Sigmoid colon (tissue), 7 donors: ENCODE measurements at regions of chr9 and their contacts with region 1.

Region 1: DNA sequence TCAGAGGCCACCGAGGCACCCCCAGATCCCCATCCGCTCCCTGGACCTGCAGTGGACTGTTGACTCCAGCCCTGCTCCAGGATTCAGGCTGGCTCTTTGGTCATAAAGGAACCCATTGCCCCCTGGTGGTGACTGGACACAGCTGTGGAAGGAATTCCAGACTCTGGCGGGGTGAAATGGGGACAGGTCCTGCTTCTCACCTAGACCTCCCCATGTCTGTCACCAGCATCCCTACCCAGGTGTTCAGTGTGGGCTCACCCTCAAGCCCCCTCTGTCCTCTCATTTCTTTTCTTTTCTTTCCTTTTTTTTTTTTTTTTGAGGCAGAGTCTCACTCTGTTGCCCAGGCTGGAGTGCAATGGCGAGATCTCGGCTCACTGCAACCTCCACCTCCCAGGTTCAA is 25.5 kb upstream of the STXBP1 start:
- DNase-seq: peak; percentile 94
- H3K4me3 ChIP-seq: no peak overlapping the region
- H3K27ac ChIP-seq: peak overlapping the region in 3 of 4 donors; percentile 32 to 77 (median 76)
- H3K4me1 ChIP-seq: peaks cover 0 to 23% (median 19%) of the 10 kb centered on the region in 4 donors
- H3K27me3 ChIP-seq: no peaks in the 10 kb centered on the region
- CTCF ChIP-seq: peak; percentile 79 to 93 (median 88)
- EP300 ChIP-seq: no peak
- POLR2A ChIP-seq: no peak

Region 2: DNA sequence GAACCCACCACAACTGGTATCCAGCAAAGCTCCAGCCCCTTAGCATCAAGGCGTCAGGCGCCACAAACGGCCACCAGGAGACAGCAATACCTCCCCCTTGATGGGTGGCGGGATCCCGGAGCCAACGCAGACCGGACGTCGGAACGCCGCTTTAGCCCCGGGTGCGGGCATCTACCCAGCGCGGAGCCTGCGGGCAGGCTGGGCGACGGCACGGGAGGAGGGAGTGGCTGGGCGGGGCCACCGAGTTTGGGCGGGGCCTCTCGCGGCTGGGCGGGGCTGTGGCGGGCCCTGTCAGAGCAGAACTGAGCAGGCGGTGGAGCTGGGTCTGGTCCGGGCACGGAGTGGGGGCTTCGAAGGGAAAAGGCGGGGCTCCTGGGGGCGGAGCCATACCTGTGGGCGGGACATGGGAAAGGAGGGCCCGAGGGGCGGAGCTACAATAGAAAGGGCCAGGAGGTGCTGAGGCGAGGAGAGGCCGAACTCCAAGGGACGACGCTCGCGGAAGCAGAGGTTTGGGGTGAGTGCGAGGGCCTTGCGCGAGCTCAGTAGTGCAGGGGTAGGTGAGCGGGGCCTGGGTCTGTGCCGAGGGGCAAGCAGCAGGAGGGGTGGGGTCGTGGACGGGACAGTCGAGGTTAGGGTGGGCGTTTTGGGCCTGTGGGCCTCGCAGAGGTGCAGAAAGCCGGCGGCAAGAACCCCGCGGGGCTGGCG is 362.2 kb before region 1 on chr9:
- intact Hi-C with region 1: no loop called
- DNase-seq: peak; percentile 97
- H3K4me3 ChIP-seq: peak overlapping the region; percentile 36 to 84 (median 68)
- H3K27ac ChIP-seq: peak overlapping the region; percentile 80 to 85 (median 82)
- H3K4me1 ChIP-seq: peaks cover 0 to 23% (median 20%) of the 10 kb centered on the region in 4 donors
- H3K27me3 ChIP-seq: no peaks in the 10 kb centered on the region
- CTCF ChIP-seq: peak in 2 of 4 experiments; percentile 18 to 32
- EP300 ChIP-seq: no peak
- POLR2A ChIP-seq: no peak

Region 3: DNA sequence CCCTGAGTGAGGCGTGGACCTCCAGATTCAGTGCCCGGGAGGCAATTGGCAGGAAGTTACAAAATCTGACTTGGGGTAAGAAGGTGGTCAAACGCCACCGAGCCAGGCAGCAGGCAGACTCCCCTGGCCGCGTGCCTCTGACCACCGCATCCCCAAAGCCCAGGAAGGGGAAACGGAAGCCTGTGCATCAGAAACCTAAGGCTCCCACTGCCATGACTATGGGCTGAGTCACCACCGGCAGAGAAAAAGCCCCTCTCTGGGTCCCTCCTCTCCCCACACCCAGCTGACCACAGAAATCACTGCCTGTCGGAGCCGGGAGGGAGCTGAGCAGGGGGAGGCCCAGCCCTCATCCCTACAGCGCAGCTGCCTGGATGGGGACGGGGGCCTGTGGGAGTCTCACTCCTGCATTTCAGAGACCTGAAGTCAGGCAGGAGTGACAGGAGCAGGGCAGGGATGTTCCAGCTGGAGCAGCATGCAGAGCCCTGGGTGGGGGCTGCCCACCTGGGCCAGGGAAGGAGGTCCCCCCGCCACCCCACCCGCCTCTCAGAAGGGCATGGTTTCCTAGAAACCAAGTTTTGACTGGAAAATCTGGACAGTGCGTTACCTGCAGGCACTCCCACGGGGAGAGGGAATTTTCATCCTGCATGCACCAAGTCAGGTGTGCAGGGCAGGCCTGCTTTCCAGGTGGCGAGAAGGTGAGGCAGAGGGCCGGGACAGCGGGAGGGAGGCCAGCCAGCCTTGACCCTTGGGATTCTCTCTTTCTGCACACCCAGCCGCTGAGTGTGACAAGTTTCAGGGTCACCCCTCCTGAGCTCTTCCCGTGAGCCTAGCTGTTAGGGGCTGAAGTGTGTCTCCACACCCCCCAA is 67.0 kb before region 1 on chr9:
- intact Hi-C with region 1: loop called (anchors 5 kb)
- DNase-seq: no peak
- H3K4me3 ChIP-seq: no peak overlapping the region
- H3K27ac ChIP-seq: peak overlapping the region; percentile 20 to 90 (median 59)
- H3K4me1 ChIP-seq: peaks cover 0 to 55% (median 47%) of the 10 kb centered on the region in 4 donors
- H3K27me3 ChIP-seq: no peaks in the 10 kb centered on the region
- CTCF ChIP-seq: no peak
- EP300 ChIP-seq: no peak
- POLR2A ChIP-seq: no peak

Region 4: GRCh38 chr9:127734747-127735529 is 148.4 kb after region 1 on chr9 and contains the start of gene TOR2A:
- intact Hi-C with region 1: loop called (anchors 1 kb)
- DNase-seq: peak; percentile 99
- H3K4me3 ChIP-seq: peak within 1 kb of the TSS; percentile 50 to 93 (median 76)
- H3K27ac ChIP-seq: peak within 1 kb of the TSS; percentile 91 to 98 (median 98)
- H3K4me1 ChIP-seq: peaks cover 0 to 27% (median 16%) of the 10 kb centered on the region in 4 donors
- H3K27me3 ChIP-seq: no peaks in the 10 kb centered on the region
- CTCF ChIP-seq: peak; percentile 89 to 99 (median 98)
- EP300 ChIP-seq: no peak
- POLR2A ChIP-seq: peak in 1 of 2 donors; percentile 46
- total RNA-seq, gene TOR2A: 6.1 to 10.4 (median 7.9) TPM

Region 5: GRCh38 chr9:127869310-127870152 is 283.0 kb after region 1 on chr9:
- intact Hi-C with region 1: loop called (anchors 2 kb)
- DNase-seq: peak; percentile 95
- H3K4me3 ChIP-seq: no peak overlapping the region
- H3K27ac ChIP-seq: peak overlapping the region in 1 of 4 donors; percentile 37
- H3K4me1 ChIP-seq: peaks cover 0 to 17% (median 16%) of the 10 kb centered on the region in 4 donors
- H3K27me3 ChIP-seq: no peaks in the 10 kb centered on the region
- CTCF ChIP-seq: peak; percentile 74 to 90 (median 84)
- EP300 ChIP-seq: no peak
- POLR2A ChIP-seq: no peak